ENCODE measurements at regions of chr3 and their contacts with region 1.

Region 1: DNA sequence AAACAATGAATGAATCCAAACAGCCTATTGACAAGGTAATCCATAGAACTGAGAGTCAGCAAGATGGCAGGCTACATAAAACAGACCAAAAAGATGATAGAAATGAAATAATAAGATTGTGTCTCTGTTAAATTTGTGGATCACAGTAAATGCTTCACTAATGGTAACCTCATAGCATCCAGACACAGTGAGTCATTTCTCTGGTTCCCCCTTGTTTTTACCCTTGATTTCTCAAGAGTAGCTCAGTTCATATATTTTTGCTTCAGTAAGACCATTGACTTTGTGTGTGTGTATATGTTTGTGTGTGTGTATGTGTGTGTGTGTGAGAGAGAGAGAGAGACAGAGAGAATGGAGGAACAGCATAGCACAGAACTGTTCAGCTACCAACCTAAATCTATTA is 546.9 kb downstream of the RBMS3 start:
- DNase-seq: no peak
- ATAC-seq: no peak
- H3K4me3 ChIP-seq: no peak overlapping the region
- H3K27ac ChIP-seq: no peak overlapping the region
- H3K4me1 ChIP-seq: peaks cover 0 to 3% of the 10 kb centered on the region in 2 donors
- H3K27me3 ChIP-seq: no peaks in the 10 kb centered on the region
- CTCF ChIP-seq: no peak
- POLR2A ChIP-seq: no peak

Region 2: GRCh38 chr3:29555590-29555989 is 272.2 kb before region 1 on chr3:
- in situ Hi-C with region 1: no loop called
- intact Hi-C with region 1: no loop called
- DNase-seq: no peak
- ATAC-seq: no peak
- H3K4me3 ChIP-seq: no peak overlapping the region
- H3K27ac ChIP-seq: no peak overlapping the region
- H3K4me1 ChIP-seq: peaks cover 8 to 14% of the 10 kb centered on the region in 2 donors
- H3K27me3 ChIP-seq: no peaks in the 10 kb centered on the region
- CTCF ChIP-seq: no peak
- POLR2A ChIP-seq: no peak

Region 3: DNA sequence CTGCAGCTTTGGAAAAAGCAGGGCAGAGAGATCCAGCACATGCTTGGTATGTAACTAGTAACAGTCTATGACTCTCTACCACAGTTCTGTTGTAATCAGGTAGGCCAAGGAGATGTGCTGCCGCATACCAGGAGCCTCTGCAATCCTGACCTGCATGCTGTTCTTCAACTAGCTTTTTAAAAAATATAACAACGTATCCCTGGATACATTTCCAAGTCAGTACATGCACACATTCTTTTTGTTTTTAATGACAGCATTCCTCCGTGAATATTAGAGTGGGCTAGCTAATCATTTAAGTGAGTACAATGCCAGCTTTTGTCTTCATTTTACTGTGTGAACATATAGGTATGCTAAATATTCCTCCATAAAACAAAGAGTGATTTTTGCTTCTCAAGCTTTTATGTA is 109.1 kb before region 1 on chr3:
- in situ Hi-C with region 1: no loop called
- intact Hi-C with region 1: no loop called
- DNase-seq: no peak
- ATAC-seq: no peak
- H3K4me3 ChIP-seq: no peak overlapping the region
- H3K27ac ChIP-seq: no peak overlapping the region
- H3K4me1 ChIP-seq: no peaks in the 10 kb centered on the region
- H3K27me3 ChIP-seq: no peaks in the 10 kb centered on the region
- CTCF ChIP-seq: no peak
- POLR2A ChIP-seq: no peak

Region 4: DNA sequence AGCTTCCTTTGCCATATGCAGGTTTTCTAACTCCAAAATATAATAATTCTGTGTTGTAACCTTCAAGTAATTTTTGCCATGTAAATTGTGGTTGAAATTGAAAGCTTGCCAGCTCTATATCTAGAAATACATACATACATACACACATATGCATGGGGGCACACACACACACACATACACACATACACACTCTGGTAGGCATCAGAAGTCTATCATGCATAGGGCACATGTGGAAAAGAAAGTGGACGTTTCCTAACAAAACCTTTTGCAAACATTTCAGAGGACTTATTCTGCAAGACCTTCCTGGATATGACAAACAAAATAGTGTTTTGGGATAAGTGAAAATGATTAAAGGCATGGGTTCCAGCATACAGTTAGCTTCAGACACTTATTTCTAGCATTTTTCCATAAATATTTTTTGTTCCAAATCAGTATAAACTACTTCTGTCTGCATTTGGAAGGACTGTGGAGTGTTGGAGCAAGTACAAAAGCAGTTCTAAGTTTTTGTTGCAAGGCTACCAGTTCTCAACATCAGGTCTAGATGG is 32.0 kb after region 1 on chr3:
- in situ Hi-C with region 1: no loop called
- intact Hi-C with region 1: loop called (anchors 1 kb)
- DNase-seq: no peak
- ATAC-seq: no peak
- H3K4me3 ChIP-seq: no peak overlapping the region
- H3K27ac ChIP-seq: no peak overlapping the region
- H3K4me1 ChIP-seq: peaks cover 0 to 4% of the 10 kb centered on the region in 2 donors
- H3K27me3 ChIP-seq: no peaks in the 10 kb centered on the region
- CTCF ChIP-seq: no peak
- POLR2A ChIP-seq: no peak